Endothelial cell of umbilical vein (primary cell): ENCODE measurements at regions of chr1 and their contacts with region 1.

Region 1: GRCh38 chr1:84506002-84506728 is at the starts of genes GNG5 and SPATA1:
- DNase-seq: peak; percentile 97
- H3K4me3 ChIP-seq: peak within 1 kb of the TSS; percentile 55 to 89 (median 73)
- H3K27ac ChIP-seq: peak within 1 kb of the TSS; percentile 91
- H3K4me1 ChIP-seq: peaks cover 25% of the 10 kb centered on the region
- H3K27me3 ChIP-seq: no peaks in the 10 kb centered on the region
- CTCF ChIP-seq: no peak
- POLR2A ChIP-seq: peak; percentile 81
- total RNA-seq, gene GNG5: 172 and 175 TPM in 2 replicates
- total RNA-seq, gene SPATA1: 1.7 and 2.6 TPM in 2 replicates

Region 2: GRCh38 chr1:84450910-84451309 is 55.3 kb before region 1 on chr1:
- CTCF ChIA-PET with region 1: no interaction called
- POLR2A ChIA-PET with region 1: no interaction called
- dilution Hi-C with region 1: no loop called
- intact Hi-C with region 1: no loop called
- DNase-seq: no peak
- H3K4me3 ChIP-seq: no peak overlapping the region
- H3K27ac ChIP-seq: no peak overlapping the region
- H3K4me1 ChIP-seq: no peaks in the 10 kb centered on the region
- H3K27me3 ChIP-seq: peaks cover 9 to 14% of the 10 kb centered on the region in 2 experiments
- CTCF ChIP-seq: no peak
- POLR2A ChIP-seq: no peak

Region 3: DNA sequence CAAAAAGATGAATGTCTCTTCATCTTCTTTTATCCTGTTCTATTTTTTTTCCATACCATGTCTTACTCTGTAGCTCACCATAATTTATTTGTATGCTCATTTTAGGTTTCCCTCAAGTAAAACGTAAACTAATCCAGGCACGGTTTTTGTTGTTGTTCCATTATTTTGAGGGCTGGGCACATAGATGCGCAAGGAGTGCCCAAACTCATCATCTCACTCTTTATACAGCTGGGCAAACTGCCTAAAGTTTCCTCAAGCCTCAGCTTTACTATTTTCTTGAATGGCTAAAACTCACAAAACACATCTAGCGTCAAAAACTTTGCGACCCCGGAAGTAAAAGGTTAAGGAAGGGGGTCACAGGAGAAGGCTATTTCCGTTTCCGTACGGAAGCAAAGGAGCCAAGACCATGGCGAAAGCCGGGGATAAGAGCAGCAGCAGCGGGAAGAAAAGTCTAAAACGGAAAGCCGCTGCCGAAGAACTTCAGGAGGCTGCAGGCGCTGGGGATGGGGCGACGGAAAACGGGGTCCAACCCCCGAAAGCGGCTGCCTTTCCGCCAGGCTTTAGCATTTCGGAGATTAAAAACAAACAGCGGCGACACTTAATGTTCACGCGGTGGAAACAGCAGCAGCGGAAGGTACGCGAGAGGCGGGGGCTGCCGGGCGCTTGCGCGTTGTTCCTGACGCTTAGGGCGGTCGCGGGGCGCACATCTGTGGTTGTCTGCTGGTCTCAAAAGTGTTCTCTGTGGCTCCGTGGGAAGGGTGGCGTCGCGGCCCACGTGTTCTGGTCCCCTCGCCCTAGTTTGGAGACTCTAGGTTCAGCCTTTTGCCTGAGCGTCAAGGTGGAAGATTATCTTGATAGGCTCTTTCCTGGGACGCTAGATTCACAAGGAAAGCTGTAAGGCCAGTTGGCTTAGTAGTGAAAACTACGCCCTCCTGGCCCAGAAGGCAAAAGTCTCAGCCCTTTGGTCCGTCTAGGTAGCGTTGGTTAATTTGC is 27.0 kb before region 1 on chr1 and contains the start of gene RPF1:
- CTCF ChIA-PET with region 1: no interaction called
- POLR2A ChIA-PET with region 1: interaction called, 3 read pairs
- dilution Hi-C with region 1: no loop called
- intact Hi-C with region 1: loop called (anchors 1 kb)
- DNase-seq: peak; percentile 85
- H3K4me3 ChIP-seq: peak within 1 kb of the TSS; percentile 59 to 95 (median 64)
- H3K27ac ChIP-seq: peak within 1 kb of the TSS; percentile 66
- H3K4me1 ChIP-seq: peaks cover 17% of the 10 kb centered on the region
- H3K27me3 ChIP-seq: no peaks in the 10 kb centered on the region
- CTCF ChIP-seq: no peak
- POLR2A ChIP-seq: peak; percentile 68
- total RNA-seq, gene RPF1: 32.6 and 34.3 TPM in 2 replicates

Region 4: DNA sequence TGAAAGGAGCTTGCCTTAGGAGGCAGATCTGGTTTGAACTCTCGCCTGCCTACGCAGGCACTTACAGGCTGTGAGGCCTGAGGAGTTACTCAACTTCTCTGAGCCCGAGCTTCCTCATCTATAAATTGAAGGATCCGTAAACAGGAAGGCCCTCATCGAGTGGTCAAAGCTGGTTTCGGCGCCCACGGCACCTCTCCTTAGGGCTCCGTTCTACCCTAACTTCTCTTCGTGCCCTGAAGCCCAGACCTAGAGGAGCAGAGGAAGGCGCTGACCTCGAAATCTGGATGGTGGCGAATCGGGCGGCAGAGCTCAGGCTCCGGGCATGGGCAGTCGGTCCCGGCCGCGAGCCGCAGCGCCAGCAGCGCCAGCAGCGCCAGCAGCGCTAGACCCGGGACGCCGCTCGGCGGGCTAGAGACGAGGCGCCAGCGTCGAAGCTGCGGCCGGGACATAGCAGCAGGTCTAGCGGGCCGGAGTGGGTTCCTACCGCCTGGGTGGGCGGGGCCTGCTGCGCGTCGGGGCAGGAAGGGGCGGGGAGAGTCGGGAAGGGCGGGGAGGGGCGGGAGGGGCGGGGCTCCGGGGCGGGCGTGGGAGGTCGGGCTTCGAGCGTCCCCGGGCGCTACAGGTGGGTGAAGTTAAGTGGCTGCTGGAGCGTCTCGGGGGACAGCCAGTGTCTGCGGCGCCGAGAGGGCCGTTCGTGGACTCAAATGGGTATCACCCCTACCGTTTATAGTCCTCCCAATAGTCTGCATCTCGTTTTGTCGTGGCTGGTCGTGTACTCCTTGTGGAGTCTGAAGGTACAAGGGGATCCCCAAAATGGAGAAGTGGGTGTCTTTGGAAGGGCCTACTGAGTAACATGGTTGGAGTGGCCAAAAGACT is 68.0 kb after region 1 on chr1 and contains the start of gene CTBS:
- CTCF ChIA-PET with region 1: interaction called, 15 read pairs
- POLR2A ChIA-PET with region 1: interaction called, 30 read pairs
- dilution Hi-C with region 1: no loop called
- intact Hi-C with region 1: loop called (anchors 1 kb)
- DNase-seq: peak; percentile 85
- H3K4me3 ChIP-seq: peak within 1 kb of the TSS; percentile 40 to 69 (median 62)
- H3K27ac ChIP-seq: peak within 1 kb of the TSS; percentile 98
- H3K4me1 ChIP-seq: peaks cover 17% of the 10 kb centered on the region
- H3K27me3 ChIP-seq: no peaks in the 10 kb centered on the region
- CTCF ChIP-seq: no peak
- POLR2A ChIP-seq: peak; percentile 86
- total RNA-seq, gene CTBS: 10.7 and 14.3 TPM in 2 replicates

Region 5: DNA sequence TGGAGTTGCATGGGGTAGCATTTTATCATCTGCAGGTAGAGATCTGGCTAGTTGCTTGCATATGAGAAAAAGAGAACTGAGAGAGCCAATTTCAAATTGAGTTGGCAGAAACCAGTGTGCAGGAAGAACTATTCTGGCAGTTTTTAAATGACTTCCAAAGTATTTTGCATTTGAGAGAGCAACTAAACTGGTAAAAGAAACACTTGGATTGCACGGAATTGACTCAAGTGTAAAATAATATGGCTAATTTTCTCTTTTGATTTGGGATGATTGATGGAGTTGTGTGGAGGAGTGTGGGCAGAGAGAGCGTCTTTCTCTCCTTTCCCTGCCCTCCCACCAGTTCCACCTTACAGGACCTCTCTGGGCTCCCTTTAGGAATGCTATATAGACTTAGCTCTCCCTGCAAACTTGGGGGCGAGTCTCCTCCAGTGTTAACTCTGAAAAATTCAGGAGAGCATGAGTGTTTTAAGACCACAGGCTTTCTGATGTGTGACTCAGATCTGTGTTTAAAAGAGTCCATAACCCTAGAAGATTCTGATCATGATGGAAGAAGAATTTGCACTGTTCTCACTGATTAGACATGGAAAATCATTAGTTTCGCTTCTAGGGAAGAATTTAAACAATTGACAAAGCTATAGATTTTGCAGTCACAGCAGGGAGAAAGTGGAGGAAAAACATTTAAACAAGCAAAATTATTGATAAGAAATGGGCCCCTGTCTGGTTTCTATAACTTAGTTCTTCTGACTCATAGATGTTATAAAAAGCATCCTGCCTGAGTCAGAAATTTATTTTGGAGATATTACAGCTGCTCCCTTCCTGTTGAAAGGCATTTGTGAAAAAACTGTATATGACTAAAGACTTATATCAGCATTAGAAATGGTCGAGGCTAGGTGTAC is 92.9 kb after region 1 on chr1:
- CTCF ChIA-PET with region 1: interaction called, 37 read pairs
- POLR2A ChIA-PET with region 1: interaction called, 11 read pairs
- dilution Hi-C with region 1: no loop called
- intact Hi-C with region 1: loop called (anchors 1 kb)
- DNase-seq: peak; percentile 93
- H3K4me3 ChIP-seq: peak overlapping the region in 1 of 3 experiments; percentile 7
- H3K27ac ChIP-seq: peak overlapping the region; percentile 96
- H3K4me1 ChIP-seq: peaks cover 36% of the 10 kb centered on the region
- H3K27me3 ChIP-seq: no peaks in the 10 kb centered on the region
- CTCF ChIP-seq: no peak
- POLR2A ChIP-seq: no peak

Region 6: DNA sequence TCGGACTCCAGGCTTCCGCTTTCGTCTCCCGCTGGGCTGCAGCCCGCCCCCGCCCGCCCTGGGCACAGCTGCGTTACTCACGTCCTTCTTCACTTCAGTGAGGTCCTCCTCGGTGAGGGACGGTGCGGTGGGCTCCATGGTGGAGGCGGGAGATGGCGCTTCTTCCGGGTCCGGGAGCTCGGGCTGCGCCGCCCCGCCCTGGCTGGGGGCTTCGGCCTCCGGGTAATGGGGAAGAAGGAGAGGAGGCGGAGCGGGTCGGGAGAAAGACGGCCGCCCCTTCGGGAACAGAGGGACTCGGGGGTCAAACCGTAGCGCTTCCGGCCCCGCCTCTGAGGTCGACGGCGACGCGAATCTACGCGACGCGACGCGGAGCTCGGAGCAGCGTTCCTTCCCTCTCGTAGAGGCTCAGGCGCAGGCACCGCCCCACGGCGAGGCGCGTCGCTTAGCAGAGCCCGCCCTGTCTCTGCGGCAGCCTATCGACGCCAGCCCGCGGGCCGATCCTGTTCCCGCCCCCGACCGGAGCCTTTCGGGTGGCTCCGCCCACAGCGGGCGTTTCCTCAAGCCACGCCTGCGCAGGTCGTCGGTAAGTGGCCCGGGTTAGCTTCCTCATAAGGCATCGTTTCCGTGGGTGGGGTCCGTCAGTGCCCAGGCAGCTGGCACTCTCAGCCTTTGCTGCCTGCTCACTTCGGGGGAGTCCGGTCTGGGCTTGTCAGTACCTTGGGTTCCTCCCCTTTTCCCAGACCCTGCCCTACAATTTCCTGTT is 770.2 kb after region 1 on chr1 and contains the start of gene BCL10:
- CTCF ChIA-PET with region 1: no interaction called
- POLR2A ChIA-PET with region 1: interaction called, 5 read pairs
- dilution Hi-C with region 1: no loop called
- intact Hi-C with region 1: loop called (anchors 10 kb)
- DNase-seq: peak; percentile 99
- H3K4me3 ChIP-seq: peak within 1 kb of the TSS; percentile 95 to 99 (median 98)
- H3K27ac ChIP-seq: peak within 1 kb of the TSS; percentile 100
- H3K4me1 ChIP-seq: peaks cover 56% of the 10 kb centered on the region
- H3K27me3 ChIP-seq: no peaks in the 10 kb centered on the region
- CTCF ChIP-seq: no peak
- POLR2A ChIP-seq: peak; percentile 64
- total RNA-seq, gene BCL10: 74.5 and 78.6 TPM in 2 replicates